ENCODE measurements at regions of chr9 and their contacts with region 1.

Region 1: DNA sequence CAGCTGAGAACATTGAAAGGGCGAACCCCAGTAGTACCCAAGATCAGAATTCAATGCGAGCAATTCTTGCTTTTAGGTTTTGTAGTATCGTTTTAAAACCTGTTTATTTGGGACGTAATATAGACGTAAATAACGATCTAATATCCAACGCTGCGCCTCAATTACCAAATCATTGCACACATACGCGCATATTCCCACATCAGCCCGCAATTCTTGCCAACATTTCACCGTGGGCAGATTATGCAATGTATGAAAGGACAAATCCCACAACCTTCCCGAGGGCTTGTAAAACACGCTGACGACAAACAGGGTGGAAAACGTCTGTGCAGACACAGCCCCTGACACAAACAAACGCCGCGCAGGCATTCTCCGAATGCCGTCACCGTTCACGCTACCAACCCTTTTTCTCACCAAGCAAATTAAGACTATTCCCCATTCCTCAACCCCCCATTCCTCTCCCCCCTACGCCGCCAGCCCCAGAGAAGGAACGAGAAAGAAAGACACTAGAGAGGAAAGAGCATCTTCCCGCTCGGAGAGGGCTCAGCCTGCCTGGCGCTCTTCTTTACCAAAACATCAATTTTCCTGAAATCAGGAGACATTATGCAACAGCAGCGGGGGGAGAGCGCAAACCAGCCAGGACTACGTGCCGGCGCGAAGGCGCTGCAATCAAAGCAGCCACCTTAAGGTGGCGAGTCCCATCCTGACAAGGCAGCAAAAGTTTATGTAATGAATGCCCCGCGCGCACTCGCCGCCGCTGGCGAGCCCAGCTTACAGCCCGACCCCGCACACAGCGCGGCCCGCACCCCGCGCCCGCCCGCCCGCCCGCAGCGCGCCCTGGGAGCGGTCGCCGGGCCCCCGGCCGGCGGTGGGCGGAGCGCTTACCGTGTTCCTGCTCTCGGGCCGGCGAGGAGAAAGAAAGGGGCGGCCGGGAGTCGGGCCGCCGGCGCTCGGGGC is 597 bp downstream of the NFIL3 start:
- DNase-seq: peak; percentile 72 to 82 (median 77)
- H3K4me3 ChIP-seq: peak overlapping the region; percentile 60
- H3K27ac ChIP-seq: peak overlapping the region; percentile 90 to 95
- H3K4me1 ChIP-seq: peaks cover 9% of the 10 kb centered on the region
- H3K27me3 ChIP-seq: no peaks in the 10 kb centered on the region
- CTCF ChIP-seq: peak in 1 of 3 donors; percentile 22
- EP300 ChIP-seq: peak; percentile 89
- POLR2A ChIP-seq: peak; percentile 59

Region 2: DNA sequence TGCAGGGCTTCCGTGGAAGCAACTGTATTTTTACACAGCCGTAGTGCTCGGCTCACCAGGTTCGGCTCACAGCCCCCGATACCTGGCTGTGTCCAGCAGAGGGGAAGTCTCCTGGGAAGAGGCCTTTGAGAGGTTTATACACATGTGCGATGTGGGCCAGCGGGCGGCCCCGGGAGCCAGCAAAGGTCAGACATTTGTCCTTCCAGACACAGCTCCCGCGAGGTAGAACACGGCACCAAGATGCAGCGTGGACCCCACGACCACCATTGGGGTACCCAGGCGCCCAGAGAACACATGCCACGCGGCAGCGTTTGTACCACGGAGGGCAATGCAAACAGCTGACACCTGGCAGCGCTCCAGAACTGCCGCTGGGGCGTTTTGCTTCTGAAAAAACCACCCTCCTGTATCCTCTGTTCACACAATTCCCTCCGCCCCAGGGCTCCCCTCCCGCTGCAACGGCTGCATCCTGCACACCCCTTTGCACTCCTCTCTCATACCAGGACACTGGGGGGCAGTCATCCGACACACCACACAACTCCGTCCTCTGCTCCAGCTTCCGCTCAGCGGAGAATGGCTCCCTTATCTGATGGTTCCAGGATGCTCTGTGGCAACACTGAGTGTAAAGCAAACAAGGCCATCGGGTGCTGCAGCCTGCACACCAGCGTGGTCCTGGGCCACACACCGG is 386.1 kb before region 1 on chr9:
- intact Hi-C with region 1: loop called in 3 of 4 experiments (anchors 5 to 10 kb)
- DNase-seq: peak; percentile 73 to 83 (median 77)
- H3K4me3 ChIP-seq: no peak overlapping the region
- H3K27ac ChIP-seq: peak overlapping the region in 1 of 2 donors; percentile 8
- H3K4me1 ChIP-seq: peaks cover 18% of the 10 kb centered on the region
- H3K27me3 ChIP-seq: no peaks in the 10 kb centered on the region
- CTCF ChIP-seq: peak in 2 of 3 donors; percentile 50 to 55
- EP300 ChIP-seq: no peak
- POLR2A ChIP-seq: no peak

Region 3: DNA sequence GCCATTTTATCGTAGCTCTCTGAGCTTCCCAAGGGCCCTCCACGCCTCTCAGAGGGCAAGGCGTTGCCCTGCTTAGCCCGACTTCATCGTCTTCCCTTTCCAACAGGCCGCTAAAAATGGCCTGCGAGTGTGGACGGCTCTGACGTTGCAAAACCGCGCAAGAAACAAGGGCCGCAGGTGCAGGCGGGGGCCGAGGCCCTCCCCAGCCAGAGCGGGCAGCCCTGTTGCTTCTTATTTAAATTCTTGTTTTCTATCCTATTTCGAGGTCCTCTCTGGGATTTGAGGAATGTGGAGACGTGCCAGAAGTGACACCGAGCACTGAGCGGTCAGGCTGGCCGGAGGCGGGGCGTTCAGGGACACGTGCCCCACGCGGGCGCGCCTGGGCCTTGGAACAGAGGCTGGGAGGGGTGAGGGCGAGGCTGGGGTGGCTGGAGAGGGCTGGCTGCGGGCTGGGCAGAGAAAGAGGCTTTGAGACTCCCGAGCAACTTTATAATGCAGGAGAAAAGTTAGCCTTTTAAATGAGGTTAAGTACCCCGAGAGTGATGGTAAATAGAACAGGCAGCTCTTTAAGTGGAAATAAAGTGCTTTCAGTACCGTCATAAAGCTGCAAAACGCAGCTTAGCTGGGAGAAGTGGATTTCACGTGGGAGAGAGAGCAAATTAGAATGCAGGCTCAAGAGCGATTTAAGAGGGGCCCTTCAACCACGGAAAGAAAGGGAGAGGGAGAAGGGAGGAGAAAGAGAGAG is 304.9 kb before region 1 on chr9:
- intact Hi-C with region 1: loop called in 1 of 4 experiments (anchors 5 kb)
- DNase-seq: peak; percentile 87 to 93 (median 91)
- H3K4me3 ChIP-seq: peak overlapping the region; percentile 17
- H3K27ac ChIP-seq: peak overlapping the region; percentile 79 to 82
- H3K4me1 ChIP-seq: peaks cover 7% of the 10 kb centered on the region
- H3K27me3 ChIP-seq: no peaks in the 10 kb centered on the region
- CTCF ChIP-seq: no peak
- EP300 ChIP-seq: no peak
- POLR2A ChIP-seq: peak; percentile 43

Region 4: DNA sequence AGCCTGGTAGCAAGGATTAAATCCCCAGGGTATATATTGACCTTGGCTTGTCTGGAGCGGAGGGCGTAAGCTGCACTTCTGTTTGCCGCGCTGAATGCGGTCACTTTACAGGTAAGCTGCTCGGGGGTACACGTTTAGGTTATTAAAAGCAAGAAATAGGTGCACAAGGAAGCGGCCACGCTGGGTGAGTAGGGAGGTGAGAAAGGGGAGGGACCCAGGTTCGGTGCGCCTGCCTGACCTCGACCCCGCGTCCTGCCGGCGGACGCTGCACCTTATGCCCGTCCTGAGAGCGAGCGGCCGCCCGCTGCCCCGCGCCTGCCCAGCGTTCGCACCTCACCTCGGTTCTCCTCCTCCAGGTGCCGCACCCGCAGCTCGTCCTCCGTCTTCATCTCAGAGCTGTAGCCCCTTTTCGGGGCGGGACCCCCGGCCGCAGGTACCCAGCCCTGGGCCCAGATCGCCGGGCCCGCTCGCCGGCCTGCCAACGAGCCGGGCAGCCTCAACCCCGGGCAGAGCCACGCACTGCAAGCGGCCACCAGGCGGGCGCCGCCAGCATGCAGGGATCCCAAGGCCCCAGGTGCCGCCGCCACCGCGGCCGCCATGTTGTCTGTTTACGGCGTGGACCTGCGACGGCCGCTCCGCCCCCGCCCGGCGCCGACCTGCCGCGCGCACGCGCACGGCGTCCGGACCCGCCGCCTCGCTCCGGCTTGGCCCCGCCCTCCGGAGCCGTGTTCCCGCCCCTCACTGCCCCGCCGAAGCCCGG is 61.6 kb before region 1 on chr9 and contains the start of gene AUH:
- intact Hi-C with region 1: loop called in 1 of 4 experiments (anchors 5 kb)
- DNase-seq: peak; percentile 84 to 94 (median 90)
- H3K4me3 ChIP-seq: peak within 1 kb of the TSS; percentile 100
- H3K27ac ChIP-seq: peak within 1 kb of the TSS; percentile 87
- H3K4me1 ChIP-seq: peaks cover 3% of the 10 kb centered on the region
- H3K27me3 ChIP-seq: no peaks in the 10 kb centered on the region
- CTCF ChIP-seq: no peak
- EP300 ChIP-seq: no peak
- POLR2A ChIP-seq: peak; percentile 49
- total RNA-seq, gene AUH: 12.0 to 48.5 (median 23.2) TPM